ENCODE measurements at regions of chr17 and their contacts with region 1.

Region 1: DNA sequence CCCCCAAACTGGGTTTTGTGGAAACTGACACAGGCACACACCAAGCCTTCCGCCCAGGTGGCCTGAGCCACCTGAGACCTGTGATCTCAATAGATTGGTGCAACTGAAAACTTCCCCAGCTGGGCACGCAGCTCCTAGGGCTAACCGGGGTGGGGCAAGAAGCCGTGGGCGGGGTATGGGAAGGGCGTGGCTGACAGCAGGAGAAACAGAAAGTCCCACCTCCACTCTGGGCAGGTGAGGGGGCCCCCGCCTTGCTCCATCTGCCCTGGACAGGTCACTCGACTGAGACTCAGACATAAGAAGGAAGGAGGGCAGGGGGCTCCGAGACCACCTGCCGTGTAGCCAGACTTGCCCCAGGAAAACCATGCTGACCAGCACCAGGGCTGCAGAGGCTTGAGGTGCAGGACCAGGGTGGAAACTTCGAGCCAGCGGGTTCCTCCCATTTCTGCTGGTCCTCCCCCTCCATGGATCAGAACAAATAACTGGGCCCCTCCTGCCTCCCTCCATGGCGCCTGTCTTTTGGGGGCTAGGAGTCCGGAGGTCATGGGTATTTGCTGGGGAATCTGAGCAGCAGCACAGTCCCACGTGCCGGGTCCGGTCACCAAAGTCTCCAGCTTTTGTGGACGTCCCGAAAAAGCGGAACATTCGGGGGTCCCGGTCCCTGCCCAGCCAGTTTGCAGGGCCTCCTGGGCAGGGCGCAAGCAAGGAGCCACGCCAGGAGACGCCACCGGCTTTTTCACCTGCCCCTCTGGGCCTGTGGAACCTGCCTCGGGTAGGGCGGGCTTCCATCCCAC is 1.3 kb downstream of the TIMP2 start:
- DNase-seq: peak; percentile 82
- H3K4me3 ChIP-seq: peak overlapping the region; percentile 60 to 93 (median 80)
- H3K27ac ChIP-seq: peak overlapping the region; percentile 97 to 100 (median 99)
- H3K4me1 ChIP-seq: peaks cover 0 to 62% (median 57%) of the 10 kb centered on the region in 4 donors
- H3K27me3 ChIP-seq: no peaks in the 10 kb centered on the region
- CTCF ChIP-seq: no peak
- EP300 ChIP-seq: no peak
- POLR2A ChIP-seq: no peak

Region 2: GRCh38 chr17:78865682-78866390 is 58.0 kb before region 1 on chr17:
- intact Hi-C with region 1: loop called (anchors 5 kb)
- DNase-seq: peak; percentile 91
- H3K4me3 ChIP-seq: no peak overlapping the region
- H3K27ac ChIP-seq: peak overlapping the region; percentile 44 to 75 (median 51)
- H3K4me1 ChIP-seq: peaks cover 0 to 50% (median 35%) of the 10 kb centered on the region in 4 donors
- H3K27me3 ChIP-seq: no peaks in the 10 kb centered on the region
- CTCF ChIP-seq: peak; percentile 82 to 91 (median 88)
- EP300 ChIP-seq: no peak
- POLR2A ChIP-seq: no peak

Region 3: GRCh38 chr17:78883164-78884122 is 40.4 kb before region 1 on chr17:
- intact Hi-C with region 1: loop called (anchors 2 kb)
- DNase-seq: peak; percentile 95
- H3K4me3 ChIP-seq: peak overlapping the region; percentile 8 to 30 (median 22)
- H3K27ac ChIP-seq: peak overlapping the region; percentile 88 to 93 (median 90)
- H3K4me1 ChIP-seq: peaks cover 0 to 89% (median 87%) of the 10 kb centered on the region in 4 donors
- H3K27me3 ChIP-seq: no peaks in the 10 kb centered on the region
- CTCF ChIP-seq: no peak
- EP300 ChIP-seq: peak in 1 of 4 donors; percentile 86
- POLR2A ChIP-seq: peak; percentile 20 to 29